Endothelial cell of umbilical vein (primary cell): ENCODE measurements at regions of chr17 and their contacts with region 1.

Region 1: GRCh38 chr17:57671667-57672632 is 73.1 kb downstream of the CCDC182 start:
- DNase-seq: peak; percentile 55
- H3K4me3 ChIP-seq: no peak overlapping the region
- H3K27ac ChIP-seq: no peak overlapping the region
- H3K4me1 ChIP-seq: no peaks in the 10 kb centered on the region
- H3K27me3 ChIP-seq: no peaks in the 10 kb centered on the region
- CTCF ChIP-seq: peak; percentile 91 to 94
- POLR2A ChIP-seq: no peak

Region 2: GRCh38 chr17:57130761-57131461 is 541.0 kb before region 1 on chr17:
- CTCF ChIA-PET with region 1: interaction called, 42 read pairs
- POLR2A ChIA-PET with region 1: no interaction called
- dilution Hi-C with region 1: no loop called
- intact Hi-C with region 1: loop called (anchors 1 kb)
- DNase-seq: peak; percentile 57
- H3K4me3 ChIP-seq: no peak overlapping the region
- H3K27ac ChIP-seq: no peak overlapping the region
- H3K4me1 ChIP-seq: no peaks in the 10 kb centered on the region
- H3K27me3 ChIP-seq: no peaks in the 10 kb centered on the region
- CTCF ChIP-seq: peak; percentile 46 to 85
- POLR2A ChIP-seq: no peak

Region 3: DNA sequence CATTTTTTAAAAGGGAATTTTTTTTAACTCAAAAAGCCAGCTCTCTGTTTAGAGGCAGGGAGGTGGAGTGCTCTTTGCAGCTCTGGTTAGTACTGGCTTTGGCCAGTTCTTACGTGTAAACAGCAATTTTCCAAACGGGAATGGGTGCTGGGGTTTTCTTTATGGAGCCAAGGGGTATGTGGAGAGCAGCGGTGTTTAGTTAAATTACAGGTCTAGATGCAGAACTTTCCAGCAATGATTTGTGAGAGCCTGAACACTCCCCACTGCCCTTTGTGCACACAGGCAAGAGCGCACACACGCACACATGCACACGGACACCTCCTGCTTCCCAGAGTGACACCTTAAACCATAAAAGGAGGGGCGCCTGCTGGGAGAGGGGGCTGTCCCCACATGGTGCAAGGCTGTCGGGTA is 275.4 kb before region 1 on chr17:
- CTCF ChIA-PET with region 1: no interaction called
- POLR2A ChIA-PET with region 1: no interaction called
- dilution Hi-C with region 1: no loop called
- intact Hi-C with region 1: no loop called
- DNase-seq: no peak
- H3K4me3 ChIP-seq: no peak overlapping the region
- H3K27ac ChIP-seq: no peak overlapping the region
- H3K4me1 ChIP-seq: no peaks in the 10 kb centered on the region
- H3K27me3 ChIP-seq: no peaks in the 10 kb centered on the region
- CTCF ChIP-seq: no peak
- POLR2A ChIP-seq: no peak

Region 4: DNA sequence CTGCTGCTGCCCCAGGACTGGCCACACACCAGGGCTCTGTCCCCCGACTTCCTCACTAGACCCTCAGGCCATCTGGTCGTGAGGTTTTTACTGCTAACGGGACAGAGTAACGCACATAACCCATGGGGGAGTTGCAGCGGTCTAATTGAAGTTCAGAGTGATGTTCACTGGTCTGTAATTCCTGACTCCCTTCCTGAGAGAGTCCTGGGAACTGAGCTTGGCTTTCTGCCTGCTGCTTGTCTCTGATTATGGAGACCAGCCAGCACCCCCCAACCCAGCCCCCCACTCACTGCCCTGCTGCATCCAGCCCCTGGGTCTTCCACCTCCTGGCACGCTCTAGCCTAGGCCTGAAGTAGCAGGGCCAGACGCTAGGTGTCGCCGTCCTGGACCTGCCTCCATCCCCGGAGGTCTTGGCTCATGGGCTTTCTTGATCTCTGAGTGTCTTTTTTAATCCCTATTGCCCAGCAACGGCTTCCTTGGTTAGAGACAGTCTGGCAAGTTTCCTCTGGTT is 119.8 kb before region 1 on chr17:
- CTCF ChIA-PET with region 1: interaction called, 8 read pairs
- POLR2A ChIA-PET with region 1: no interaction called
- dilution Hi-C with region 1: no loop called
- intact Hi-C with region 1: loop called (anchors 1 kb)
- DNase-seq: no peak
- H3K4me3 ChIP-seq: no peak overlapping the region
- H3K27ac ChIP-seq: no peak overlapping the region
- H3K4me1 ChIP-seq: peaks cover 3% of the 10 kb centered on the region
- H3K27me3 ChIP-seq: no peaks in the 10 kb centered on the region
- CTCF ChIP-seq: peak; percentile 24 to 54
- POLR2A ChIP-seq: no peak

Region 5: DNA sequence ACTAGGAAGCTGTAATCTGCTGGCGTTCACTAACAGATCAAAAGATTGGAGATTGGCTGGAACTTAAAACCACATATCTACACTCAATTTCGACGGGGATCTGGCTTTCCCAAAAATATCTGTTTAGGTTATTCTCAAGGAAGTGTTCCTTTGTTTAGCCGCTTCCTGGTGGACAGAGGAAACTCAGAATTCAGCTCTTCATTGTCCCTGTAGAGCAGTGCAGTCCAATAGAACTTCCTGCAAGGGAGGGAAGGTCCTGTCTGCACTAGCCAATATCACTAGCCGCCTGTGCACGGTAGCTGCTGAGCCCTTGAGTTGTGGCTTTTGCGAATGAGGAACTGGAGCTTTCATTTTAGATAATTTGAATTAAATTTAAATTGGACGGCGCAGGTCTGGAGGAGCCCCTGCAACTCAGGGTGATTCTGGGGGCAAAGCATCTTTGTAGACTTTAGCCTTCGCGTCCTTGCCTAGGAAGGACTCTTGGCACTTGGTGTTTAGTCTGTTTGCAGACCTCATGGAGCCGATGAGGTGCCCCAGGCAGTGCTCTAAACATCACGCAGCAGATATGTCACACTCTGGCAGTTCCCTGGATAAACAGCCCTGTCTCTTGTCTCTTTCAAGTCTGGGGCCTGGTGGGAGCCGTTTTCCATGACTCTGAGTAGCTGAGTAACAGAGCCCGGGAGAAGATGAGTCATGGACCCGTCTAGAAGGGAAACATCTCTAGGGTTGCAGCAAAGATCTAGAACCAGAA is 49.1 kb before region 1 on chr17:
- CTCF ChIA-PET with region 1: interaction called, 15 read pairs
- POLR2A ChIA-PET with region 1: no interaction called
- dilution Hi-C with region 1: no loop called
- intact Hi-C with region 1: no loop called
- DNase-seq: peak; percentile 39
- H3K4me3 ChIP-seq: no peak overlapping the region
- H3K27ac ChIP-seq: peak overlapping the region; percentile 26
- H3K4me1 ChIP-seq: peaks cover 13% of the 10 kb centered on the region
- H3K27me3 ChIP-seq: no peaks in the 10 kb centered on the region
- CTCF ChIP-seq: no peak
- POLR2A ChIP-seq: no peak

Region 6: DNA sequence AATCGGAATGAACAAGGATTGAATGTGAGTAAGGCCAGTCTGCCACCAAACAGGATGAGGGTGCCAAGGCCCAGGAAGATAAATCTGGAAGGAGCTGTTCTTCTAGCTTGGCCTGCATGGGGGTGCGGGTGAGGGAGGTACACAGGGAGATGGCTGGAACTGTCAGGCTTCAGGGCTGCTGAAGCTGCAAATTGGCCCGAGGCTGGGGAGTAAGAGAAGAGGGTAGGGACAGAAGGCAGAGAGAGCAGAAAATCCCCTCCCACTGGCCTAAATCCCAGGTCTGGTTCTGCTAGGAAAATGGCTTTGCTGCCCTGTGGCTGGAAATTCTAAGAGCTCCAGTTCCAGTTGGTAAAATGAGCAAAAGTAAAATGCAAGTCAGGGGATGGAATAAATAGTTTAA is 14.7 kb before region 1 on chr17:
- CTCF ChIA-PET with region 1: interaction called, 29 read pairs
- POLR2A ChIA-PET with region 1: no interaction called
- dilution Hi-C with region 1: no loop called
- intact Hi-C with region 1: no loop called
- DNase-seq: no peak
- H3K4me3 ChIP-seq: no peak overlapping the region
- H3K27ac ChIP-seq: no peak overlapping the region
- H3K4me1 ChIP-seq: peaks cover under 1% of the 10 kb centered on the region
- H3K27me3 ChIP-seq: no peaks in the 10 kb centered on the region
- CTCF ChIP-seq: no peak
- POLR2A ChIP-seq: no peak